GM12878 (cell line): ENCODE measurements at regions of chr3 and their contacts with region 1.

Region 1: DNA sequence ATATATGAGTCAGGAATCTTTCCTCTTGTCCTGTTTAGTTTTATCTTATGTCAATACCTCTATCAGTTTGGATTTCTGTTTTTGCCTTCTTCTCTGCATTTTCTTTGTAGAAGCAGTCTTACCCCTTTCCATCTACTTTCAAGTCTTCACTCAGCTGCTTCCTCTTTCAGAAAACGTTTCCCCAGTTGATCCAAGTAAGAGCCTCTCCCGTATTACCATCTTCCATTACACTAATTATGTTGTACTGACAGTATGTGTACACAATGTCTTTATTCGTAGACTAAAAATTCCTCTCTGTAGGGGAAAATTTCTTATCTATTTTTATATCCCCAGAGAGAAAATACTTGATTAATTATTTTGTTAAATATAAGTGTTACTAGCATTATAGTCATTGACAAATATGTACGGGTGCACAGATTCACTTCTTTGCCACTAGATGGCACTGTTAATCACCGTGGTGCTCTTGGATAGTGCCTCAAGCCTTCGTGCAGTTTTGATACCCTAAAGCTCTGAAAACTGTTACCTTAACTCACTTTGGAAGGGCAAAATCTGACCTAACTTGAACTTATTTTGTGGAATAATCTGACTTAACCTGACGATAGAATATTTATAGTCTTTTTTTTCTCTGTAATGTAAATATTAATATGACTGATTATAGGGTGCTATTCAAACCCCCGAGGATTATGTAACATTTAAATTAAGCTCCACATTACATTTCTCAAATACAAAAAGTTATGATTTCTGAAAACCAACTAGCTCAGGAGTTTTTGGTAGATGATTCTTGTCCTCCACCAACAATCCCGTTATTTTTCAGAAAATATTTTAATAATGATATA is 74.2 kb upstream of the POU1F1 start:
- DNase-seq: no peak
- ATAC-seq: peak; percentile 96
- H3K4me3 ChIP-seq: no peak overlapping the region
- H3K27ac ChIP-seq: no peak overlapping the region
- H3K4me1 ChIP-seq: no peaks in the 10 kb centered on the region
- H3K27me3 ChIP-seq: no peaks in the 10 kb centered on the region
- CTCF ChIP-seq: peak; percentile 71 to 87 (median 81)
- EP300 ChIP-seq: no peak
- POLR2A ChIP-seq: no peak
- RAD21 ChIP-seq: peak; percentile 76

Region 2: DNA sequence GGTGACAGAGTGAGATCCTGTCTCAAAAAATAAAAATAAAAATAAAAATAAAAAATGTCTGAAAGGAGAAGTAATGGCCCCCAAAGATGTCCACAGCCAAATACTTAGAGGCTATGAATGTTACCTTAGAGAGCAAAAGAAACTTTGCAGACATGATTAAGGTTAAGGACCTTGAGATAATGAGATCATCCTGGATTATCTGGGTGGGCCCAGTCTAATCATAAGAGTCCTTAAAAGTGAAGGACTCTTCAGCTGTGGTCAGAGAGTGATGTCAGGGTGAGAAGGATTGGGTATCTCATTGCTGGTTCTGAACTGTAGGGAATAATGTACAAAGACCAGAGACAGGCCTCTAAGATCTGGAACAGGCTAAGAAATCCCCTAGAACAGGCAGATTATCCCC is 10.7 kb after region 1 on chr3:
- CTCF ChIA-PET with region 1: interaction called, 17 read pairs
- POLR2A ChIA-PET with region 1: no interaction called
- RAD21 ChIA-PET with region 1: no interaction called
- SMC1A ChIA-PET with region 1: interaction called, 5 read pairs
- in situ Hi-C with region 1: no loop called
- intact Hi-C with region 1: no loop called
- DNase-seq: no peak
- ATAC-seq: no peak
- H3K4me3 ChIP-seq: no peak overlapping the region
- H3K27ac ChIP-seq: no peak overlapping the region
- H3K4me1 ChIP-seq: no peaks in the 10 kb centered on the region
- H3K27me3 ChIP-seq: no peaks in the 10 kb centered on the region
- CTCF ChIP-seq: no peak
- EP300 ChIP-seq: no peak
- POLR2A ChIP-seq: no peak
- RAD21 ChIP-seq: no peak

Region 3: GRCh38 chr3:87461036-87461435 is 110.5 kb after region 1 on chr3:
- CTCF ChIA-PET with region 1: no interaction called
- POLR2A ChIA-PET with region 1: no interaction called
- RAD21 ChIA-PET with region 1: no interaction called
- SMC1A ChIA-PET with region 1: no interaction called
- in situ Hi-C with region 1: no loop called
- intact Hi-C with region 1: no loop called
- DNase-seq: no peak
- ATAC-seq: no peak
- H3K4me3 ChIP-seq: no peak overlapping the region
- H3K27ac ChIP-seq: no peak overlapping the region
- H3K4me1 ChIP-seq: no peaks in the 10 kb centered on the region
- H3K27me3 ChIP-seq: no peaks in the 10 kb centered on the region
- CTCF ChIP-seq: no peak
- EP300 ChIP-seq: no peak
- POLR2A ChIP-seq: no peak
- RAD21 ChIP-seq: no peak

Region 4: DNA sequence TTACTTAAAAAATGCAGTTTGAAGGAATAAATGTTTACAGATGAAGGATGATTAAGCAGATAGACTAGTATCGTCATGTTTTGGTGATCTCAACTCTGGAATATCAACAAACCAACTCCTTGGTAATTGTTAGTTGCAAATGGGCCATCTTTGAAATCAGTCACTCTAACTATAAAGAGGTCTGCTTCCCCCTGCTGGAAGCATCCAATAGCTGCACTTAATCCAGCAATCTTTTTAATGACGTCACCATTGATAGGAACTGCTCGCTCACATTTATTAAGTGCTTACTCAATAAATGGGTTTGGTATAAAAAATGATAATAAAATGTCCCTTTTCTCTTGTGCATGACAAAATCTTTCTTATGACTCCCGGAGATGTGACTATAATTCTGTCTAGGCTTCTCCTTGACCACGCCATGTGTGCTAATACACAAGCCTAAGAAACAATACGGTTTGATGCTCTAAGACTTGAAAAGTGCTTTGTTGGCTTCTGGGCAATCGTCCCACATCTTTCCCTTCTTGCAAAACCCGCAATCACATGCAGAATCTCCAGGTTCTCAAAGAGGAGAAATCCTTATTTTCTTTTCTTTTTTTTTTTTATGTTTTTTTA is 153.4 kb after region 1 on chr3:
- CTCF ChIA-PET with region 1: interaction called, 22 read pairs
- POLR2A ChIA-PET with region 1: no interaction called
- RAD21 ChIA-PET with region 1: interaction called, 3 read pairs
- SMC1A ChIA-PET with region 1: interaction called, 6 read pairs
- in situ Hi-C with region 1: no loop called
- intact Hi-C with region 1: loop called (anchors 1 kb)
- DNase-seq: no peak
- ATAC-seq: peak; percentile 78
- H3K4me3 ChIP-seq: no peak overlapping the region
- H3K27ac ChIP-seq: no peak overlapping the region
- H3K4me1 ChIP-seq: no peaks in the 10 kb centered on the region
- H3K27me3 ChIP-seq: no peaks in the 10 kb centered on the region
- CTCF ChIP-seq: peak; percentile 48 to 60 (median 54)
- EP300 ChIP-seq: no peak
- POLR2A ChIP-seq: no peak
- RAD21 ChIP-seq: peak; percentile 65

Region 5: DNA sequence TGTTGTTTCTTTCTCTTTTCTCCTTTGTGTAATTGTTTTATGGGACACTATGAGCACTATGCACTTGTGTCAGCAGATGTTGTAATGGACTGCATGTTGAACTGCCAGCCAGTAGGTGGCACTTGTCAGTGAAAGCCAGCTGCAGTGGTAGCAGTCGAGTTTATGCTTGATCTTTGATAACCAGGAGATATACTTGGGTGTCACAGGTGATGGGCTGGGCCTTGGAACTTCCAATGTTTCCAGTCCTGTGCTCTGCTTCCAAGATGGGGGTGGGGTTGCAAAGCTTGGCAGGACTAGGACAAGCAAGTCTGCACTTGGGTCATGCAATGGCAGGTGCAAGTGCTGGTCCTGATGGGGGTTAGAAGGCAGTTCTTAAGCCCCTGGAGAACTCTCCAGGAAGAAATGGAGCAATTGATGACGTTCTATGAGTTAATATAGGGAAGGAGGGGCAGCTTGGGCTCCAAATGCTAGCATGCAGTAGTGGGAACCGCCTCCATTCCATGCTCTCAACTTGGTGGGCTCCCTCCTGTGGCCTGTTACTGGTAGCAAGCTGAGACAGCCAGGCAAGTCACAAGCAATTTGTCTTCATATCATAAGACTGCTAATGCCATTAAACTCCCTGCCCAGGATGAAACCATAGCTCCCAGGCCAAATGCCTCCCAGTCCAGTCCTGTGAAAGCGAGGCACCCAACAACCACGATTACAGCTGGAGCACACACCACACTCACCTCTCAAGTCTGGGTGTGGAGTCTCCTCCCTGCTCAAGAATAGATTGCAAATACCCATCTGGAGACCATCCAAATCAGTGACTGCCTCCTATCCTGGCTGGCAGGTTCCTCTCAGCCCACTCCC is 421.0 kb after region 1 on chr3:
- CTCF ChIA-PET with region 1: interaction called, 5 read pairs
- POLR2A ChIA-PET with region 1: no interaction called
- RAD21 ChIA-PET with region 1: no interaction called
- SMC1A ChIA-PET with region 1: no interaction called
- in situ Hi-C with region 1: no loop called
- intact Hi-C with region 1: loop called (anchors 5 kb)
- DNase-seq: peak; percentile 8
- ATAC-seq: peak; percentile 96
- H3K4me3 ChIP-seq: no peak overlapping the region
- H3K27ac ChIP-seq: no peak overlapping the region
- H3K4me1 ChIP-seq: no peaks in the 10 kb centered on the region
- H3K27me3 ChIP-seq: no peaks in the 10 kb centered on the region
- CTCF ChIP-seq: peak; percentile 73 to 87 (median 82)
- EP300 ChIP-seq: no peak
- POLR2A ChIP-seq: no peak
- RAD21 ChIP-seq: peak; percentile 61